Tibial artery (tissue), 4 donors: ENCODE measurements at regions of chr3 and their contacts with region 1.

Region 1: DNA sequence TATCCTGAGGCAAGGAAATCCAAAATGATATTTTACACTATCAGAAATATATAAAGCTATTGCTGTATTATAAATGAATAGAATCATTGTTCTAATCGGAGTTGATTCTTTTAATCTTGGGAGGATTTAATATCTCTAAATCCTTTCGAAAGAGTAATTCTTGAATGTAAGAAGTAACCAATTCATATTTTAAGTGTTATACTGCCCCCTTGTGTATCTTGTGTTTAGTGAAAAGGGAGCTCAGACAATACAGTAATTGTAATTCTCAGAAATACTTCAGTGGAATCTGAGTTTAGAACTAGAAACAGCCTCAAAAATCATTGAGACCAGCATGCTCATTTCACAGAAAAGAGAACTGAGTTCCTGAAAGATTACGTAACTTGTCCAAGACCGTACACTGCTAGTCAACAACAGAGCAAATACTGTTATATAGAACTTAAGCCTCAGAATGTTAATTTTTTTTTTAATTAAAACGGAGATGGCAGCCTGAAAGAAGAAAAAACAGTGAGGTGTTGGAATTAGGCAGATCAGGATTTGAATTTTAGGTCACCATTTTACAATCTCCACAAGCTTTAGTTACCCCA is 42.9 kb downstream of the PLCH1 start:
- DNase-seq: no peak
- H3K4me3 ChIP-seq: no peak overlapping the region
- H3K27ac ChIP-seq: no peak overlapping the region
- H3K4me1 ChIP-seq: no peaks in the 10 kb centered on the region
- H3K27me3 ChIP-seq: no peaks in the 10 kb centered on the region
- CTCF ChIP-seq: peak; percentile 59 to 75

Region 2: DNA sequence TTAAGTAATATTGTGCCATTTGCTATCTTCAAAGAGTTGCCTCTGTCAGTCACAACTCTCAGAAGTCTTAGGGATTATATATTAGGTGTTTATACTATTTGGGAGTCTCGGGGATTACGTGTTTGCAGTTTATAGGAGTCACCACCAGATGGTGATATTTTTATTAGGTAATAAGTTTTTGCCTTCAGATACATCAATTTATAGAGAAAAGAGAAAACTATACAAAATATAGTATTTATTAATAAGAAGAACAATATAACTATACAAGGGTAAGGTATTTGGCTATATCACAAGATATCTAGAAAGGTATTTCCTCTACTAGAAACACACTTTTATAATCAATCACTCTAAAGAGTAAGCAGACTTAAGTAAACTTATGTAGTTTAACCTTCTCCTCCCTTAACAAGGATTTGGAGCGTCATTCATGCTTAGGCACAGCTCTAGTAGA is 1367.0 kb before region 1 on chr3:
- intact Hi-C with region 1: loop called (anchors 5 kb)
- DNase-seq: no peak
- H3K4me3 ChIP-seq: no peak overlapping the region
- H3K27ac ChIP-seq: no peak overlapping the region
- H3K4me1 ChIP-seq: no peaks in the 10 kb centered on the region
- H3K27me3 ChIP-seq: no peaks in the 10 kb centered on the region
- CTCF ChIP-seq: peak; percentile 23 to 50

Region 3: DNA sequence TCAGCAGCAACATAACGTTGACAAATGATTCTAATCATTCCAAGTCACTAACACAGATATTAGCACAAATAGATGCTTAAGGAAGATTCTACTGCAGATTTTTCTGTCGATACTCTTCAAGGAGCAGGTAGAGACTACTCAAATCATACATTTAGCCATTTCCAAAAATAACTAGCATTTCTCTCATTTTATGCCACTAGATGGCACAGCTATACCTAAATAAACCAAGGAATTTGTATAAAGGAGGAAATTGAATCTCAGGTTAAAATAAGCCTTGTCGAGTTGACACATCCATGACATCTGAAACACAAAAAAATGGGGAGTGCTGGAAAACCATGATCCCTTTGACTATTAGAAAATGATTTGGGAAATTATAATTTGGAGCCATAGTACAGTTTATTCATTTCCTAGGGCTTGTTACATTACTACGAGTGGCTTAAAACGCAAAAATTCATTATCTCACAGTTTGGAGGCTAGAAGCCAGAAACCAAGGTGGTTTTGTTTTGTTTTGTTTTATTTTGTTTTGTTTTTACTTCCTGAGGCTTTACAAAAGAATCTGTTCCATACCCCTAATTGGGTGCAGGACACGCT is 349.0 kb before region 1 on chr3:
- intact Hi-C with region 1: loop called (anchors 10 kb)
- DNase-seq: no peak
- H3K4me3 ChIP-seq: no peak overlapping the region
- H3K27ac ChIP-seq: no peak overlapping the region
- H3K4me1 ChIP-seq: no peaks in the 10 kb centered on the region
- H3K27me3 ChIP-seq: no peaks in the 10 kb centered on the region
- CTCF ChIP-seq: peak; percentile 39 to 69